ENCODE measurements at regions of chr11 and their contacts with region 1.

Region 1: DNA sequence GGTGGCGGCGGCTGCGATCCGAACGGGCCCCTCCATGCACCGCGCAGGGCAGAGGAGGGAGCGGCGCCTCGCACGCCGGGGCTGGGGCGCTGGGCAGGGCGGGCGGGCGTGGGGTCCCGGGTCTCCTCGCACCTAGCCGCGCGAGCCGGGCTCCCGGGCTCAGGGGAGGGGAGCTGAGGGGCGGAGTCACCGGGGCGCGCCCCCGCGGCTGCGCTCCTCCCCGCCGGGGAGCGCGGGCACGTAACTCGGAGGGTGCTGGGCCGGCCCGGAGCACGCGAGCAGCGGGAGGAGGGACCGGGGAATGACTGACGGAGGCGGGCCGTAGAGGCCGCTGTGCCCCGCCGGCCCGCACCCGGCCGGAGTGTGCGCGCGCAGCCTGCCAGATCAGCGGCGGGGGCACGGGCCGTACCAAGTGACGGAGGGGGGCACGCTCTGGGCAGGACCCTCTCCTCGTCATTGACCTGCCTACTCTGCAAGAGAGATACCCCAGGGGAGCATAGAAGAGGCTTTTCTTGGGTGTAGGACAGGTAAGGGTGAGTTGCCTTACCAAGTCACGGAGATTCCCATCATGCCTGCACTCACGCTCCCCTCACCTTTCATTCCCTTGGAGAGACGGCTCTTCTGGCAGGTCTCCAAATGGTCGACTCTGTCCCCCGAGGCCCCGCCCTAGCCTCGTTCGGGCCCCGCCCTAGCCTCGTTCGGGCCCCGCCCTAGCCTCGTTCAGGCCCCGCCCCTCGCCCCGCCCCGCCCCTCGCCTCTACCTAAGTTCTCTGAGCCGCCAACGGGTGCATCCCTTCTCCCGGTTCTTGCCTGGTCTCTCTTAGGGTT is at the start of gene CDON:
- DNase-seq: peak; percentile 95 to 98
- H3K4me3 ChIP-seq: peak within 1 kb of the TSS; percentile 89
- H3K4me3 Mint-ChIP-seq: peak within 1 kb of the TSS; percentile 95
- H3K27ac Mint-ChIP-seq: peak within 1 kb of the TSS; percentile 100
- H3K4me1 ChIP-seq: peaks cover 8% of the 10 kb centered on the region
- H3K4me1 Mint-ChIP-seq: peaks cover 8% of the 10 kb centered on the region
- H3K27me3 ChIP-seq: no peaks in the 10 kb centered on the region
- H3K27me3 Mint-ChIP-seq: peaks cover 16% of the 10 kb centered on the region
- CTCF ChIP-seq: peak in 1 of 2 experiments; percentile 6
- total RNA-seq, gene CDON: 5.7 and 6.8 TPM in 2 replicates

Region 2: GRCh38 chr11:125923012-125923579 is 139.8 kb before region 1 on chr11:
- CTCF ChIA-PET with region 1: interaction called, 8 read pairs
- POLR2A ChIA-PET with region 1: no interaction called
- intact Hi-C with region 1: loop called (anchors 1 kb)
- DNase-seq: peak; percentile 79 to 84
- H3K4me3 ChIP-seq: no peak overlapping the region
- H3K4me3 Mint-ChIP-seq: no peak overlapping the region
- H3K27ac Mint-ChIP-seq: no peak overlapping the region
- H3K4me1 ChIP-seq: no peaks in the 10 kb centered on the region
- H3K4me1 Mint-ChIP-seq: no peaks in the 10 kb centered on the region
- H3K27me3 ChIP-seq: 0 out of 2 replicates have a peak, but pooled peaks cover 2% of the 10 kb centered on the region
- H3K27me3 Mint-ChIP-seq: peaks cover 14% of the 10 kb centered on the region
- CTCF ChIP-seq: peak; percentile 95 to 98

Region 3: DNA sequence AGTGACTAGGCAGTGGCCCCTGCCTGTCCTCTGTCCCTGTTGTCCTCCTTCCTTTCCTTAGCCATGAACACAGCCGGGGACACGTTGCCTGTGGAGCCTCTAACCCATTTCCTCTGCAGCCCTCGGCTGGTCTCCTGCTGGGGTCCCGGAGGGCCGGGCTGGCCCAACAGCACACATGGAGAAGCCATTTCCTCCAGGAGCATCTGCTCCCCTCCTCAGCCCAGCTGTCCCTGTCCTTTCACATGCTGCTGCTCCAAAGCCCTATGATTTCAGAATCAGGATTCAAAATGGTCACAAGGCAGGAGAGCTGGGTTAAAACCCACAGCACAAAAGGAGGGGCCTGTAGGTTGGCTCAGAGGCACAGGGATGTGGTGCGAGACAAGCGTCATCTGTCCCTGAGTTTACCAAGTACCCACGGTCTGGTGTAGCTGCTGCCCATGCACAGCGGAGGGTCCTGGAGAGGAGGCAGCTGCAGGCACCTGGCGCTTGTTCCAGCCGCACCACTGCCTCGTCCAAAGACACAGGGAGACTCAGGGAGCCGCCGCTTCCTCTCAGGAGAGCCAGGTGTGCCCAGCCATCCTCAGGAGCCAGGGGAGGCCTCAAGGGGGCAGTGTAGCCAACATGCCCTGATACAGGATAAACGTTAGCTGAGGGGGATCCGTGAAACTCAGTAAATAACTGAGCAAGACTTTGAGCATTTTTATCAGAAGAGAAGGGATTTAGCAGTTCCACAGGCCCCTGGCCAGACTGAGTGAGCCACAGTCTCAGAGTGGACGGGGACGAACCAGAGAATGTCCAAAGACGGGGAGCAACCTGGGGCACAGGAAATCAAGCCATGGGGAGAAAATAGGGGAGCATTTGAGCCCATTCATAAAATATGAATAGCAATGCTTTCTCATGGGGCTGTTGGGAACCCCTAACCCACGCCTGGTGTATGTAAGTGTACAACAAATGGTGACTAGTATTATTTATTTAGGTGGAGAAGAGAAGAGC is 121.0 kb before region 1 on chr11:
- CTCF ChIA-PET with region 1: interaction called, 32 read pairs
- POLR2A ChIA-PET with region 1: no interaction called
- intact Hi-C with region 1: loop called (anchors 1 kb)
- DNase-seq: peak; percentile 74 to 78
- H3K4me3 ChIP-seq: no peak overlapping the region
- H3K4me3 Mint-ChIP-seq: no peak overlapping the region
- H3K27ac Mint-ChIP-seq: no peak overlapping the region
- H3K4me1 ChIP-seq: no peaks in the 10 kb centered on the region
- H3K4me1 Mint-ChIP-seq: peaks cover 5% of the 10 kb centered on the region
- H3K27me3 ChIP-seq: 0 out of 2 replicates have a peak, but pooled peaks cover 1% of the 10 kb centered on the region
- H3K27me3 Mint-ChIP-seq: peaks cover 6% of the 10 kb centered on the region
- CTCF ChIP-seq: peak; percentile 81 to 97

Region 4: DNA sequence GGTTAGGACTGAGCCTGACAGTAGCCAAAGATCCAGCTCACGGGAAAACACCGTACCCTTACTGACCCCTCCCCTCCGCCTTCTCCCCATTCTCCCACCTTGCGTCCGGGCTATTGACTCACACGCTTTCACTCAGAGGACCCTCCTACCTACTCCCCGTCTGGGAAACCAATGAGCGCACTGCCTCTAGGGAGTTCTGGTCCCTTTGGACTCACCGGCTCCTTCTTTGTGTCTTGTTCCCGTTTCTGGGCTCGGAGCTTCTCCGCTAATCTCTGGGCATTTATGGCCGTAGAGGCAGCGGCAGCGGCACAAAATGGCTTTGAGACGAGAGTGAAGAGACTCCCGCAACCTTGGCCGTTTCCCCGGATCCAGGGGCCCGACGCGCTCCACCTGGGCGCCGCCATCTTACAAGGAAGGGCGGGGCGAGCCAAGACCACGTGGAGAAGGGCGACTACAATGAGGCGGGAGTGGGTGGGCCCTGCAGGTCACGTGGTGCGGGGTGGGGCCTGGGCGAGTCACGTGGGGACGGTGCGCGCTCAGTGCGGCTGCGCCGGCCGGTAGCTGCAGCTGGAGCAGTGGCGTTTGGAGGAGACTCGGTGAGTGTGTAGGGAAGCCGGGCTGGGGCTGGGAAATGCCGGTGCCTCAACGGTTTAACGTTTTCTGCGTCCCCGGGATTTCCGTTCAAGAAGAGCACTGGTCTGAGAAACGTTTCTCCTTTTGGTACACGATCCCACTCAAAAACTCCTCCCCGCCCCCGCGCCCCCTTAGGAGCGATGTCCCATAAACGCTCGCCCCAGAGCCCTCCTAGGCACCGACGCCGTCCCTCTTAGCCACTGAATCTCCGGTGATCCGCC is 148.6 kb after region 1 on chr11 and contains the starts of genes FAM118B and RPUSD4:
- CTCF ChIA-PET with region 1: no interaction called
- POLR2A ChIA-PET with region 1: no interaction called
- intact Hi-C with region 1: loop called (anchors 5 kb)
- DNase-seq: peak; percentile 100
- H3K4me3 ChIP-seq: peak within 1 kb of the TSS; percentile 87
- H3K4me3 Mint-ChIP-seq: peak within 1 kb of the TSS; percentile 95
- H3K27ac Mint-ChIP-seq: peak within 1 kb of the TSS; percentile 93
- H3K4me1 ChIP-seq: peaks cover 11% of the 10 kb centered on the region; the same call in 1 of the 2 replicates
- H3K4me1 Mint-ChIP-seq: peaks cover 19% of the 10 kb centered on the region
- H3K27me3 ChIP-seq: no peaks in the 10 kb centered on the region
- H3K27me3 Mint-ChIP-seq: no peaks in the 10 kb centered on the region
- CTCF ChIP-seq: no peak
- total RNA-seq, gene FAM118B: 36.5 and 44.3 TPM in 2 replicates
- total RNA-seq, gene RPUSD4: 74.2 and 74.3 TPM in 2 replicates